Dendritic cell treated with granulocyte-macrophage colony-stimulating factor and Interleukin-4, amounts not matched to agents 40 ng/mL and 50 ng/mL, for 4 days (primary cell): ENCODE measurements at regions of chr7 and their contacts with region 1.

Region 1: GRCh38 chr7:48299580-48300169 is 128.4 kb downstream of the ABCA13 start:
- H3K4me3 Mint-ChIP-seq: no peak overlapping the region
- H3K27ac Mint-ChIP-seq: no peak overlapping the region
- H3K4me1 Mint-ChIP-seq: peaks cover 5% of the 10 kb centered on the region
- H3K27me3 Mint-ChIP-seq: no peaks in the 10 kb centered on the region

Region 2: DNA sequence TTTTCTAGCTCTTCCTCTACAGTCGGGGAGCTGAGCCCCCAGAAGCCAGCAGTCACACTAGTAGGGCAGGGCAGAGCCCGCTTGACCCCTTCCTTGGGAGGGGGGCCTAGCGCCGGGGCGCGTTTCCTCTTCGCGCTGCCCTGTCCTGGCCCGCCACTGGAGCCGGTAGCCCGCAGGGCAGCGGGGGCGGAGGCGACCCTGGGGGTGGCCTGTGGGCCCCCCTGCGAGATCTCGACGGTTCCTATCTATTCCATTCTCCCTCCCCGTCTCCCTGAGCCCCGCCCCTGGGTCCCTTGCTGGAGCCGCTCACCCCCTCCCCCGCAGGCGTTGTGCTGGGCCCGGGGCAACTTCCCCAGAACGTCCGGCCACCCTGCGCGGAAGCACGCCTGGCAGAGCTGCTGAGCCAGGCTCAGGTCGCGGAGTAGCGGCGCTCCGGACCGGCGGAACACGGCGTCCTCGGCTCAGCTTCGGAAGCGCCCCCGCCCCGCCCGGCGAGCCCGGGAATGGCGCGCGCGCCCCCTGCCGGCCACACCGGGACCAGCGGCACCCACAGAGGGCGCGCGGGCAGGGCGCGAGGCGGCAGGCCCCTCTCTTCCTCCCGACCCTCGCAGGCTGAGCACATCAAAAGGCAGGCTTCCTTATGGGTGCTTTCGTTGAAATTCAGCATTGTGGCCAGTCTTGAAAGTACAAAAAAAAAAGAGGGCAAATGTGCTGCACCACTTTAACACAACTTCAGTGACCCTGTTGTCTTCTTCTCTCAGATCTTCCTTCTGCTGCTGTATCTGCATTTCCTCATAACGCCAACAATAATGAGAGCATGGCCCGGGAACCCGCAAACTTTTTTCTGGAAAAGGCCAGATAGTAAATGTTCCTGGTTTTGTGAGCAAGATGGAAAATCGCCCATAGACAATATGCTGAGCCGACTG is 1045.3 kb before region 1 on chr7:
- intact Hi-C with region 1: loop called (anchors 5 kb)
- H3K4me3 Mint-ChIP-seq: peak overlapping the region; percentile 74
- H3K27ac Mint-ChIP-seq: peak overlapping the region; percentile 51
- H3K4me1 Mint-ChIP-seq: peaks cover 21% of the 10 kb centered on the region
- H3K27me3 Mint-ChIP-seq: peaks cover 15% of the 10 kb centered on the region

Region 3: DNA sequence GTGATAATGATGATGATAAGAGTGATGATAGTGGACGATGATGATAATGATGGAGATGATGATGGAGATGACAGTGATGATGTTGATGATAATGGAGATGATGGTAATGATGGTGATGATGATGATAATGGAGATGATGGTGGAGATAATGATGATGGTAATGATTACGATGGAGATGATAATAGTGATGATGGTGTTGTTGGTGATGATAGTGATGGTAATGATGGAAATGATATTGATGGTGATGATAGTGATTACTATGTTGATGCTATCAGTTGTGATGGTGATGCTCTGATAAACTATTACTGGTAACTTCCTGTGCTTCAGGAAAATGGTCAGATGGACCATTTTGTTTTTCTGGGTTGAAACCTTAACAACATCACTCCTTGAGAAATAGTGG is 105.5 kb before region 1 on chr7:
- intact Hi-C with region 1: no loop called
- H3K4me3 Mint-ChIP-seq: no peak overlapping the region
- H3K27ac Mint-ChIP-seq: no peak overlapping the region
- H3K4me1 Mint-ChIP-seq: no peaks in the 10 kb centered on the region
- H3K27me3 Mint-ChIP-seq: no peaks in the 10 kb centered on the region

Region 4: GRCh38 chr7:48224042-48224441 is 75.6 kb before region 1 on chr7:
- intact Hi-C with region 1: no loop called
- H3K4me3 Mint-ChIP-seq: no peak overlapping the region
- H3K27ac Mint-ChIP-seq: no peak overlapping the region
- H3K4me1 Mint-ChIP-seq: no peaks in the 10 kb centered on the region
- H3K27me3 Mint-ChIP-seq: no peaks in the 10 kb centered on the region

Region 5: DNA sequence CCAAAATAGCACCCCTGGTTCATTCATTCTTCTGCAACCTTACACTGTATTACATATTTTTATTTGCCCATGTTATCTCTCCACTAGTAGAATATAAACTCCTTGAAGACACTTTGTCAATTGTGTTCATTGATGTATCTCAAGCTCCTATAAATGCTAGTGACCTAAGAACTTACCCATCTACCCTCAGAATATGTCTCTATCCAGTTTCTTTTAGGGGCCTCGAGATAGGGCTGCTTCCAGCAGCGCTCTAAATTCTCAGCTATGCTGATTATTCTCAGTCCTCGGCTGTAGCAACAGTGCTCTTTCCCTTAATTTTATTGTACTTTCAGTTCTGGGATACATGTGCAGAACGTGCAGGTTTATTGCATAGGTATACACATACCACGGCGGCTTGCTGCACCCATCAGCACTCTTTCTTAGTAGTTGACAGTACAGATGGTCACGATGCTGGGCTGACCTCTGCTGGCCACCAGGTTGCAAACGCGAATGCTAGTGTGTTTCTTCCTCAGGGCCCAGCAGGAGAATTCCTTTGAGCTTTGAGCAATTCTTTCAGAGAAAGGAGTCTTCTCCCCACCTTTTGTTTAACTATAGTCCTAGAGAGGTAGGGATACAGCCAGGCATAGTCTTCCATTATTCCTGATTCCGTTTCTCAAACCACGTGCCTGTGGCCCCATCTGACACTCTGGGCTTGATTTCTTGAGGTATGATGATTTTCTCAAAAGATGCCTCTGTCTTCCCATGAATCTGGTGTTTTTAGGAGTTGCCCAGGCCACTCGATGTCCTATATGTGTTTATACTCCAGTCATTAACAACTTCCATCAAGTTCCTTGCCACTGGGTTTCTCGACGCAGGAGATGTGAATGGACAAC is 575.6 kb after region 1 on chr7:
- intact Hi-C with region 1: loop called (anchors 1 kb)
- H3K4me3 Mint-ChIP-seq: no peak overlapping the region
- H3K27ac Mint-ChIP-seq: no peak overlapping the region
- H3K4me1 Mint-ChIP-seq: peaks cover 3% of the 10 kb centered on the region
- H3K27me3 Mint-ChIP-seq: peaks cover 6% of the 10 kb centered on the region

Region 6: GRCh38 chr7:49166441-49166840 is 866.8 kb after region 1 on chr7:
- intact Hi-C with region 1: loop called (anchors 10 kb)
- H3K4me3 Mint-ChIP-seq: no peak overlapping the region
- H3K27ac Mint-ChIP-seq: no peak overlapping the region
- H3K4me1 Mint-ChIP-seq: no peaks in the 10 kb centered on the region
- H3K27me3 Mint-ChIP-seq: no peaks in the 10 kb centered on the region

Region 7: GRCh38 chr7:49852619-49853462 is 1553.2 kb after region 1 on chr7:
- intact Hi-C with region 1: loop called (anchors 2 kb)
- H3K4me3 Mint-ChIP-seq: no peak overlapping the region
- H3K27ac Mint-ChIP-seq: no peak overlapping the region
- H3K4me1 Mint-ChIP-seq: no peaks in the 10 kb centered on the region
- H3K27me3 Mint-ChIP-seq: no peaks in the 10 kb centered on the region